ENCODE measurements at regions of chr17 and their contacts with region 1.

Region 1: DNA sequence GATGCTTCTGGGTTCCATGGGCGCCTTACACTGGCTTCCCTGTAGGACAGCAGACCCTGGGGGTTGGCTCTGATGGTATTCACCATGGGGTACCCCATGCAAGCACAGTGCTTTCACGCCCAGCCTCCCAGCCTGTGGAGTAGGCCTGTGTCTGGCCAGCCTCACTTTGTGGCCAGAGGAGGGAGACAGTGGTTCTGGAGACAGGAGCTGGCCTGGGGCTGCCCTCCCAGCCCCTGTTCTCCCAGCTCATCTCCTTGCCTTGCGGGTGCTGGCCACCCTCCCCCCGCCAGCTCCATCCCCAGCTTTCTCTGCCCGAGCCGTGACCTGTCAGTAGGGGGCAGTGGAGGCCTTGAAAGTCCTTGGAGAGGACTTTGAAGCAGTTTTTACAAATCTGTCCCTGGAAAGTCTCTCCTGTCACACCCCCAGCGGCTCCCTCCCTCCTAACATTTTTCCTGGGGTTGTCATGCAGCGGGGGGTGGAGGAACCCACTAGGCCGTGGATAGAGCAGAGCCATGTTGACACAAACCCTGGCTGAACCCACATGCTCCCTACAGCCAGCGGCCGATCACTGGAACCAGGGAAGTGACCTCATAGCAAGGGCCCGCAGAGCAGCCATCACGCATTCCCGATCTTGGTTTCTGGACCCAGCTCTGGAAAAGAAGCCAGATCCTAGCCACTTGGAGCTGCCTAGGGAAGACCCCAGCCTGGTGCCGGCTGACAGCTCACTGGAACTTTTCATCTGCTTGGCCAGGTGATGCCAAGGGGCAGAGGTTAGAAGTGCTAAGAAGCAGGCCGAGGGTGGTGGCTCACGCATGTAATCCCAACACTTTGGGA is 289.4 kb downstream of the SEC14L1 start:
- DNase-seq: peak; percentile 79 to 88 (median 81)
- ATAC-seq: peak; percentile 83
- H3K4me3 ChIP-seq: no peak overlapping the region
- H3K27ac ChIP-seq: no peak overlapping the region
- H3K4me1 ChIP-seq: peaks cover 37 to 68% of the 10 kb centered on the region in 2 experiments
- H3K27me3 ChIP-seq: no peaks in the 10 kb centered on the region
- CTCF ChIP-seq: peak; percentile 84 to 88 (median 87)
- EP300 ChIP-seq: 0 out of 2 replicates have a peak, but pooled peaks have one; percentile 30
- POLR2A ChIP-seq: no peak
- RAD21 ChIP-seq: peak; percentile 81 to 87

Region 2: DNA sequence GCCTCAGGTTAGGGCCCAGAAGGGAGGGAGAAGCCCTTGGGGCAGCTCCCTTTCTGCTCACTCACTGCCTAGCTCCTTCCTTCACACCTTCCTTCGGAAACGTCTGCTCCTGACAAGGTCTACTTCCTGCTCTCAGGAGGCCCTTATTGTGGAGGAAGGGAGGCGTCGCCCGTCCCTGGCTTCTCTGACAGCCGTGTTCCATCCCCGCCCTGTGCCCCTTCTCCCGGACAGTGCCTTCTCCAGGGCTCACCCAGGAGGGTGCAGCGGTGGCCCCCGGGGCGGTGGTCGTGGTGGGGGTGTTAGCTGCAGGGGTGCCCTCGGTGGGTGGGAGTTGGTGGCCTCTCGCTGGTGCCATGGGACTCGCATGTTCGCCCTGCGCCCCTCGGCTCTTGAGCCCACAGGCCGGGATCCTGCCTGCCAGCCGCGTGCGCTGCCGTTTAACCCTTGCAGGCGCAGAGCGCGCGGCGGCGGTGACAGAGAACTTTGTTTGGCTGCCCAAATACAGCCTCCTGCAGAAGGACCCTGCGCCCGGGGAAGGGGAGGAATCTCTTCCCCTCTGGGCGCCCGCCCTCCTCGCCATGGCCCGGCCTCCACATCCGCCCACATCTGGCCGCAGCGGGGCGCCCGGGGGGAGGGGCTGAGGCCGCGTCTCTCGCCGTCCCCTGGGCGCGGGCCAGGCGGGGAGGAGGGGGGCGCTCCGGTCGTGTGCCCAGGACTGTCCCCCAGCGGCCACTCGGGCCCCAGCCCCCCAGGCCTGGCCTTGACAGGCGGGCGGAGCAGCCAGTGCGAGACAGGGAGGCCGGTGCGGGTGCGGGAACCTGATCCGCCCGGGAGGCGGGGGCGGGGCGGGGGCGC is 57.5 kb before region 1 on chr17:
- CTCF ChIA-PET with region 1: no interaction called
- POLR2A ChIA-PET with region 1: interaction called, 4 read pairs
- in situ Hi-C with region 1: no loop called
- intact Hi-C with region 1: loop called (anchors 5 kb)
- DNase-seq: peak; percentile 89 to 95 (median 93)
- ATAC-seq: peak; percentile 88
- H3K4me3 ChIP-seq: peak overlapping the region; percentile 52
- H3K27ac ChIP-seq: peak overlapping the region; percentile 66
- H3K4me1 ChIP-seq: peaks cover 57 to 73% of the 10 kb centered on the region in 2 experiments
- H3K27me3 ChIP-seq: no peaks in the 10 kb centered on the region
- CTCF ChIP-seq: no peak
- EP300 ChIP-seq: no peak
- POLR2A ChIP-seq: no peak; the same call in 1 of the 2 replicates
- RAD21 ChIP-seq: no peak

Region 3: DNA sequence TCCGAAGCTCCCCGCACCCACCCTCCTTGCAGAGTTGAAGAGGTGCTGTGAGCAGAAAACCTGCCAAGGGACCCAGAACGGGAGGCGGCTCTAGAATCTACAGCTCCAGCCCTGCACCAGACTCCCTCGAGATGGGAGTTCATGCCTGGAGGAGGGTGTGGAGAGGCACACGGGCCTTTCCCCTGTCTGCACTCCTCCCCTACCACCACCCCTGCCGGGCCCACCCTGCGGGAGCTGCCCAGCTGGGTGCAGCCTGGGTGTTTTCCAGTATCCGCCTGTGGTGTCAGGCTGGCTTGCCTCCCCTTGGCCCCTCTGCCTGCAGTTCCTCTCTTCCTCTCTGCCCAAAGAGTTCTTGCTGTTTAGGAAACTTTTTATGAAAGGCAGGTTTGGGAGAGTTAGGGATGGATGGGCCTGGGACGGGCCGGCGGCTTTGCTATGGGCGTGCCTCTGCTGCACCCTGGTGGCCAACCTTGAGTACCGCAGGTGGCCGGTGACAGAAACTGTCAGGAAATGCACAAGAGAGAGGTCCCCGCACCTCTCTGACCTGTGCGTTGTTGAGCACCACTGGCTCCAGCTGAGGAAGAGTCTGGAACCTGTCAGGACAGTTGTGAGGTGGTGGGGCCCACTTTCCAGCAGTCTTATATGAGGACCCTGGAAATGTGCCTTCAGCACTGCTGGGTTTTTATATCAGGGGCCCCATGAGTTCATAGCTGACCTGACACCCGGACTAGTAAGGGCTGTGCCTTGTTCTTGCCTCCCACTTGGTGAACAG is 64.7 kb after region 1 on chr17:
- CTCF ChIA-PET with region 1: interaction called, 38 read pairs
- POLR2A ChIA-PET with region 1: interaction called, 3 read pairs
- in situ Hi-C with region 1: loop called (anchors 5 kb)
- intact Hi-C with region 1: loop called (anchors 1 kb)
- DNase-seq: peak; percentile 77 to 84 (median 83)
- ATAC-seq: peak; percentile 94
- H3K4me3 ChIP-seq: no peak overlapping the region
- H3K27ac ChIP-seq: no peak overlapping the region
- H3K4me1 ChIP-seq: peaks cover 0 to 10% of the 10 kb centered on the region in 2 experiments; a peak in 1 of 5 replicates
- H3K27me3 ChIP-seq: no peaks in the 10 kb centered on the region
- CTCF ChIP-seq: peak; percentile 91 to 96 (median 94)
- EP300 ChIP-seq: no peak
- POLR2A ChIP-seq: no peak
- RAD21 ChIP-seq: peak; percentile 96 to 99

Region 4: GRCh38 chr17:77535435-77535834 is 105.3 kb after region 1 on chr17:
- CTCF ChIA-PET with region 1: no interaction called
- POLR2A ChIA-PET with region 1: no interaction called
- in situ Hi-C with region 1: no loop called
- intact Hi-C with region 1: no loop called
- DNase-seq: no peak
- ATAC-seq: no peak
- H3K4me3 ChIP-seq: no peak overlapping the region
- H3K27ac ChIP-seq: no peak overlapping the region
- H3K4me1 ChIP-seq: no peaks in the 10 kb centered on the region; a peak in 1 of 5 replicates
- H3K27me3 ChIP-seq: peaks cover 32 to 56% of the 10 kb centered on the region in 2 experiments; a peak in 4 of 5 replicates
- CTCF ChIP-seq: no peak
- EP300 ChIP-seq: no peak
- POLR2A ChIP-seq: no peak
- RAD21 ChIP-seq: no peak

Region 5: GRCh38 chr17:77609553-77610517 is 179.7 kb after region 1 on chr17:
- CTCF ChIA-PET with region 1: no interaction called
- POLR2A ChIA-PET with region 1: no interaction called
- in situ Hi-C with region 1: no loop called
- intact Hi-C with region 1: no loop called
- DNase-seq: peak in 1 of 4 experiments; percentile 10
- ATAC-seq: peak; percentile 48; the same call in 1 of the 3 replicates
- H3K4me3 ChIP-seq: no peak overlapping the region
- H3K27ac ChIP-seq: no peak overlapping the region
- H3K4me1 ChIP-seq: peaks cover 0 to 8% of the 10 kb centered on the region in 2 experiments; a peak in 3 of 5 replicates
- H3K27me3 ChIP-seq: peaks cover 45 to 77% of the 10 kb centered on the region in 2 experiments
- CTCF ChIP-seq: no peak
- EP300 ChIP-seq: no peak
- POLR2A ChIP-seq: no peak
- RAD21 ChIP-seq: no peak

Region 6: DNA sequence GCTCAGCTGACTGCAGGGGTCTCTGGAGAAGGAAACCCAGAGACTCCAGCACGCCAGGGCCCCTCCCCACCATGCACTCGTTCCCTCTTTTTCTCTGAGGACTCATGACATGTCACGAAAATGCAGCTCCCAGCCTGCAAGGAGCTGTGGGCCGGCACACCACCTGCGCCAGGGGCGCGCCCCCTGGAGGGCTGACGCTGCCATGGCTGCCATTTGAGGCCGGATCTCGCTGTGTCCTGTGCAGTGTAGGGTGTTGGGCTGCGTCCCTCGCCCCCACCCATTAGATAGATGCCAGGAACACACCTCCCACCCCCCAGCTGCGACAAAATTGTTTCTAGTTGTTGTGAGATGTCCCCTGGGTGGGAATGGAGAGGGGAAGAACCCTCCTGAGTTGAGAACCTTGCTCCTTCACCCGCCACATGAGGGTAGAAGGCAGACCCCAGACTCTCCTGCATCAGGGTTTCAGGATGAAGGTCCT is 746.5 kb after region 1 on chr17:
- CTCF ChIA-PET with region 1: no interaction called
- POLR2A ChIA-PET with region 1: no interaction called
- in situ Hi-C with region 1: no loop called
- intact Hi-C with region 1: no loop called
- DNase-seq: peak; percentile 71 to 86 (median 76)
- ATAC-seq: peak; percentile 90
- H3K4me3 ChIP-seq: no peak overlapping the region
- H3K27ac ChIP-seq: peak overlapping the region; percentile 31; the same call in 1 of the 3 replicates
- H3K4me1 ChIP-seq: peaks cover 7 to 43% of the 10 kb centered on the region in 2 experiments
- H3K27me3 ChIP-seq: no peaks in the 10 kb centered on the region
- CTCF ChIP-seq: peak; percentile 92 to 97 (median 94)
- EP300 ChIP-seq: no peak
- POLR2A ChIP-seq: peak; percentile 53
- RAD21 ChIP-seq: peak; percentile 72 to 86

Measured in K562 (cell line).